ENCODE measurements at regions of chr19 and their contacts with region 1.

Region 1: DNA sequence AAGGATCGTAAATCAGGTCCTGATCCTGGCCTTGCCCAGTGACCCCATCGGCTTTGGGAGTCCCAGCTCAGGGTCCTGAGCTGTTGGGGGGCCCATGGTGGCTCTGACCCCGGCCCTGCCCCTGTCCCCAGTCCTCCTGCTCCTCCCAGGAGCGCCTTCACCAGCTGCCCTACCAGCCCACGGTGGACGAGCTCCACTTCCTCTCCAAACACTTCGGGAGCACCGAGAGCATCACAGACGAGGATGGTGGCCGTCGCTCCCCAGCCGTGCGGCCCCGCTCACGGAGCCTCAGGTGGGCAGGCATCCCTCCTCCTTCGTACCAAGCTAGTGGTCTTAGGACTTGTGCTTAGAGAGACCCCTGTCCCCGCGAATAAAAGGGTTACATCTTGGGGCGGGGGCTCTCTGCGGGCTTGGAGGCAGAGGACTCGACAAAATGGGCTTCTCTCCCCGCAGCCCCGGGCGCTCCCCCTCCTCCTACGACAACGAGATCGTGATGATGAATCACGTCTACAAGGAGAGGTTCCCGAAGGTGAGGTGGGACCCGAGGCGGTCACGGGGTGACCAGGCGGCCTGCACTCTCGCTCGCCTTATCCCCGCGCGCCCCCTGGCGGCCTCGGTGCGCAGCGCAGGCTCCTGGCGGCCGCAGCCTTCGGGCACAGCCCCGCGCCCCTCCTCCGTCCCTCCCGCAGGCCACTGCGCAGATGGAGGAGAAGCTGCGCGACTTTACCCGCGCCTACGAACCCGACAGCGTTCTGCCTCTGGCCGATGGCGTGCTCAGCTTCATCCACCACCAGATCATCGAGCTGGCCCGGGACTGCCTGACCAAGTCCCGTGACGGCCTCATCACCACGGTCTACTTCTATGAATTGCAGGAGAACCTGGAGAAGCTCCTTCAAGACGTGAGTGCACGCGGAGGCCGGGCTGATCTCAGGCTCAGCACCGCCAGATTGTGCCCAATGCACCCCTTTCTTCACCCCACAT is 9.1 kb downstream of the MAST1 start:
- DNase-seq: peak; percentile 5
- H3K4me3 ChIP-seq: peak overlapping the region; percentile 42
- CTCF ChIP-seq: peak; percentile 98

Region 2: DNA sequence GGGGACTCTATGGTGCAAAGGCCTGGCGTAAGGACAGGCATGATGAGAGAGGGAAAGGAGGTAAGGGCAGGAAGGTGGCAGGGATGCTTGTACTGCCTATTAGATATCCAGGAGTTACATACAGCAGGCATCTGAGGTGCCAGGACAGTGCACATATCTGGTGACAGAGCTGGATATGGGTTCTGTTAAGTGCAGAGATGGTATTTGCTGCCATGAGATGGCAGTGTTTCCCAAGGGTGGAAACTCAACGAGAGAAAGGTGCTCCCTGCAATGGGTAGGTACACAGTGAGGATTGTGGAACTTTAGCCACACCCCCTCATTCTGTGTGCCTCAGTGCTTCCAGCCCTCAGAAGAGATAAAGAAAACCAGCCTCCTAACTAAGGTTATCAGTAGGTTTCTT is 130.6 kb before region 1 on chr19:
- CTCF ChIA-PET with region 1: interaction called, 46 read pairs
- POLR2A ChIA-PET with region 1: no interaction called
- DNase-seq: no peak
- H3K4me3 ChIP-seq: no peak overlapping the region
- CTCF ChIP-seq: peak; percentile 12

Region 3: GRCh38 chr19:12757544-12758274 is 89.7 kb before region 1 on chr19:
- CTCF ChIA-PET with region 1: interaction called, 425 read pairs
- POLR2A ChIA-PET with region 1: interaction called, 3 read pairs
- DNase-seq: no peak
- H3K4me3 ChIP-seq: peak overlapping the region; percentile 50
- CTCF ChIP-seq: peak; percentile 82

Region 4: GRCh38 chr19:12806239-12807081 is 41.0 kb before region 1 on chr19 and contains the start of gene RNASEH2A:
- CTCF ChIA-PET with region 1: interaction called, 27 read pairs
- POLR2A ChIA-PET with region 1: interaction called, 3 read pairs
- DNase-seq: no peak
- H3K4me3 ChIP-seq: peak within 1 kb of the TSS; percentile 87
- CTCF ChIP-seq: no peak

Region 5: GRCh38 chr19:12864721-12865715 is 17.6 kb after region 1 on chr19:
- CTCF ChIA-PET with region 1: interaction called, 46 read pairs
- POLR2A ChIA-PET with region 1: no interaction called
- DNase-seq: no peak
- H3K4me3 ChIP-seq: no peak overlapping the region
- CTCF ChIP-seq: no peak

Region 6: GRCh38 chr19:12890787-12891552 is 43.5 kb after region 1 on chr19 and contains the start of gene GCDH:
- CTCF ChIA-PET with region 1: interaction called, 17 read pairs
- POLR2A ChIA-PET with region 1: no interaction called
- DNase-seq: peak; percentile 92
- H3K4me3 ChIP-seq: peak within 1 kb of the TSS; percentile 94
- CTCF ChIP-seq: no peak